ENCODE measurements at regions of chr5 and their contacts with region 1.

Region 1: DNA sequence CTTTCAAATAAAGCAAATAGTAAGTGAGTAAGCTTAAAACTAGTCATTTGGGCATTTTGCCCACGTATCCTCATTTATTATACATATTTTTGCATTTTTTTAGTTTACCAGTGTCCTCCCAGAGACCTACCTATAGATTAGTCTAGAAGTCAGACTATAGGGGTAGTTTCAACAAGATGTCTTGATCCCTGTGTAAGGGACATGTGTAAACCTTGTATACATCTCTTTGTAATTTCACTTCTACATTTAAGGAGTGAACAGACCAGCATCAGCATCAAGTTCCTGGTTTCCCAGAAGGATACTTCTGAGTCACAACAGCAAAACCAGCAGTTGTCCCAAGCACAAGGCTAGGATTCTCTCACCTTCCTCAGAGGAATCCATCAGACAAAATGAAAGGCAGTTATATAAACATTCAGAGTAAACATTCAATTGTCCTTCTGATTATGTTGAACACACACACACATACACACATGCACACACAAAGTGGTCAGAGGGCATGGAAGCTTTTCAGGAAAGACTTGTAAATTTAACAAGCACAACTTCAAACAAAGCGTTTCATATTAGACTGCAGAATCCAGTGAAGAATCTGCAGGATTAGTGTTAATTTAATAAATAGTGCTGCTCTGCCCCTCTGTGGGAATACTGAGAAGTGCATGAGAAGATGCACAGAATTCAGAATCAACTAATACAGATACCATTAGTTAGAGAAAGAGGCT is 55.4 kb downstream of the HINT1 start:
- DNase-seq: peak in 7 of 9 donors; percentile 13 to 66 (median 57)
- ATAC-seq: peak; percentile 87
- H3K4me3 ChIP-seq: no peak overlapping the region
- H3K4me3 Mint-ChIP-seq: peak overlapping the region in 1 of 10 donors; percentile 7
- H3K27ac ChIP-seq: no peak overlapping the region
- H3K27ac Mint-ChIP-seq: no peak overlapping the region
- H3K4me1 ChIP-seq: no peaks in the 10 kb centered on the region
- H3K4me1 Mint-ChIP-seq: peaks cover 0 to 17% (median 9%) of the 10 kb centered on the region in 7 donors
- H3K27me3 ChIP-seq: no peaks in the 10 kb centered on the region
- H3K27me3 Mint-ChIP-seq: no peaks in the 10 kb centered on the region

Region 2: DNA sequence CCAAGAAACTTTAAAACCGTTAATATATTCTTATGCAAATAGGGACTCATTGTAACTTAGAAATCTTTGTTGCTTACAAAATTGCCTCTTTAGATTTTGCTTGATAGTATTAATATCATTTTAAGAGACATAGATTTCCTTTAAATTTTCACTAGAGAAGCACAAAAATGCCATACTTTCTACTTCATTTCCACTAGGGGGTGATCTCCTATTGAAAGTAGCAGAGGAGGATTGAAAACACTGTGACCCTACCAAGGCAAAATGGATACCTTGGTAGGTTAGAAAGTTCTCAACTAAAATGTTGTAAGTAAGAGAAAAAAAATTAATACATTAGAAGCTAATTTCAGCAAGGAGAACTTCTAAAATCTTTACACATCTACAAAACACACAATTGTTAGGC is 1000.5 kb before region 1 on chr5:
- CTCF ChIA-PET with region 1: interaction called, 5 read pairs
- POLR2A ChIA-PET with region 1: no interaction called
- intact Hi-C with region 1: loop called (anchors 1 to 5 kb)
- DNase-seq: peak in 5 of 9 donors; percentile 1 to 13 (median 10)
- ATAC-seq: peak; percentile 42
- H3K4me3 ChIP-seq: no peak overlapping the region
- H3K4me3 Mint-ChIP-seq: no peak overlapping the region
- H3K27ac ChIP-seq: no peak overlapping the region
- H3K27ac Mint-ChIP-seq: no peak overlapping the region
- H3K4me1 ChIP-seq: no peaks in the 10 kb centered on the region
- H3K4me1 Mint-ChIP-seq: no peaks in the 10 kb centered on the region
- H3K27me3 ChIP-seq: no peaks in the 10 kb centered on the region
- H3K27me3 Mint-ChIP-seq: peaks cover 0 to 5% (median 0%) of the 10 kb centered on the region in 5 donors

Region 3: GRCh38 chr5:130198925-130199324 is 910.8 kb before region 1 on chr5:
- CTCF ChIA-PET with region 1: no interaction called
- POLR2A ChIA-PET with region 1: no interaction called
- intact Hi-C with region 1: loop called in 1 of 2 experiments (anchors 1 kb)
- DNase-seq: peak in 1 of 9 donors; percentile 1
- ATAC-seq: no peak
- H3K4me3 ChIP-seq: no peak overlapping the region
- H3K4me3 Mint-ChIP-seq: no peak overlapping the region
- H3K27ac ChIP-seq: no peak overlapping the region
- H3K27ac Mint-ChIP-seq: no peak overlapping the region
- H3K4me1 ChIP-seq: no peaks in the 10 kb centered on the region
- H3K4me1 Mint-ChIP-seq: no peaks in the 10 kb centered on the region
- H3K27me3 ChIP-seq: peaks cover 0 to 3% of the 10 kb centered on the region in 2 donors
- H3K27me3 Mint-ChIP-seq: peaks cover 0 to 32% (median 20%) of the 10 kb centered on the region in 5 donors

Region 4: GRCh38 chr5:130871346-130872086 is 238.2 kb before region 1 on chr5:
- CTCF ChIA-PET with region 1: interaction called, 30 read pairs
- POLR2A ChIA-PET with region 1: no interaction called
- intact Hi-C with region 1: loop called (anchors 1 kb)
- DNase-seq: peak in 8 of 9 donors; percentile 6 to 61 (median 42)
- ATAC-seq: peak; percentile 75
- H3K4me3 ChIP-seq: no peak overlapping the region
- H3K4me3 Mint-ChIP-seq: no peak overlapping the region
- H3K27ac ChIP-seq: no peak overlapping the region
- H3K27ac Mint-ChIP-seq: no peak overlapping the region
- H3K4me1 ChIP-seq: no peaks in the 10 kb centered on the region
- H3K4me1 Mint-ChIP-seq: no peaks in the 10 kb centered on the region
- H3K27me3 ChIP-seq: no peaks in the 10 kb centered on the region
- H3K27me3 Mint-ChIP-seq: no peaks in the 10 kb centered on the region

Region 5: DNA sequence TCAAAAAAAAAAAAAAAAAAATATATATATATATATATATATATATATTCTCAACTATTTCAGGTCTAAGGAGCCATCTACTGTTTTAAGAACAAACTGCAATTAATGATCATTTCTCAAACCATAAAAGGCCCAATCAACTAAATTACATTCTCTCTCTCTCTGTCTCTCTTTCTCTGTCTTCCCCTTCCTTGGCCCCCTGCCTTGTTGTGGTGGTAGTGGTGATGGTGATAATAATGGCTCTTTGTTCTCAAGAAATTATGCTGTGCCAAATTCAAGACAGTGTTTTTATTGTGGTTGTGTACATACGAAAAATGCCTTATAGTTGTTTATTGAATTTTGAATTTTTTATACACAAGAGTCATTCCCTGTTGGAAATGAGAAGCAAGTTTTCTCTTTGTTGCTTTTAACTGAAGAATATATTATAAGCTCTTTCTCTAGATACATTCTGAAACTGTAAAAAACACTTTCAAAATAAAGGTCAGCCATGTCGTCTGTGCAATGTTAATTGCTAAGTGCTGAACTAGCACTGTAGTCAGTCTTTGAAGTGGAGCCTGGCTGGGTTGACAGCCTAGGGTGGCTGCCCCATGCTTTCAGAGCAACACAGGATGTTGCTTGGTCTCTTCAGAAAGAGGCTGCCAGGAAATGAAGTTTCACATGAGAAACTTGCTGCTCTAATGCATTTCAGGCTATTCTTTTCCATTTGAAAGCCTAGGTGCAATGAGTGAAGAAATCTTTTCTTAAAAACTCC is 40.6 kb before region 1 on chr5:
- CTCF ChIA-PET with region 1: interaction called, 4 read pairs
- POLR2A ChIA-PET with region 1: no interaction called
- intact Hi-C with region 1: loop called (anchors 1 kb)
- DNase-seq: peak; percentile 8 to 81 (median 67)
- ATAC-seq: peak; percentile 99
- H3K4me3 ChIP-seq: peak overlapping the region; percentile 20
- H3K4me3 Mint-ChIP-seq: peak overlapping the region; percentile 1 to 83 (median 73)
- H3K27ac ChIP-seq: peak overlapping the region; percentile 46
- H3K27ac Mint-ChIP-seq: peak overlapping the region; percentile 83 to 99 (median 92)
- H3K4me1 ChIP-seq: peaks cover 18 to 29% of the 10 kb centered on the region in 2 donors
- H3K4me1 Mint-ChIP-seq: peaks cover 28 to 68% (median 58%) of the 10 kb centered on the region in 7 donors
- H3K27me3 ChIP-seq: no peaks in the 10 kb centered on the region
- H3K27me3 Mint-ChIP-seq: no peaks in the 10 kb centered on the region

Region 6: GRCh38 chr5:131417240-131417869 is 307.7 kb after region 1 on chr5:
- CTCF ChIA-PET with region 1: interaction called, 3 read pairs
- POLR2A ChIA-PET with region 1: interaction called, 3 read pairs
- intact Hi-C with region 1: loop called (anchors 1 to 2 kb)
- DNase-seq: peak; percentile 61 to 78 (median 74)
- ATAC-seq: peak; percentile 81
- H3K4me3 ChIP-seq: no peak overlapping the region
- H3K4me3 Mint-ChIP-seq: peak overlapping the region in 7 of 10 donors; percentile 27 to 70 (median 45)
- H3K27ac ChIP-seq: peak overlapping the region; percentile 23
- H3K27ac Mint-ChIP-seq: peak overlapping the region; percentile 68 to 95 (median 81)
- H3K4me1 ChIP-seq: peaks cover 8 to 14% of the 10 kb centered on the region in 2 donors
- H3K4me1 Mint-ChIP-seq: peaks cover 17 to 52% (median 46%) of the 10 kb centered on the region in 7 donors
- H3K27me3 ChIP-seq: no peaks in the 10 kb centered on the region
- H3K27me3 Mint-ChIP-seq: no peaks in the 10 kb centered on the region

Measured in naive thymus-derived CD4-positive, alpha-beta T cell (primary cell).